ENCODE measurements at regions of chr16 and their contacts with region 1.

Region 1: DNA sequence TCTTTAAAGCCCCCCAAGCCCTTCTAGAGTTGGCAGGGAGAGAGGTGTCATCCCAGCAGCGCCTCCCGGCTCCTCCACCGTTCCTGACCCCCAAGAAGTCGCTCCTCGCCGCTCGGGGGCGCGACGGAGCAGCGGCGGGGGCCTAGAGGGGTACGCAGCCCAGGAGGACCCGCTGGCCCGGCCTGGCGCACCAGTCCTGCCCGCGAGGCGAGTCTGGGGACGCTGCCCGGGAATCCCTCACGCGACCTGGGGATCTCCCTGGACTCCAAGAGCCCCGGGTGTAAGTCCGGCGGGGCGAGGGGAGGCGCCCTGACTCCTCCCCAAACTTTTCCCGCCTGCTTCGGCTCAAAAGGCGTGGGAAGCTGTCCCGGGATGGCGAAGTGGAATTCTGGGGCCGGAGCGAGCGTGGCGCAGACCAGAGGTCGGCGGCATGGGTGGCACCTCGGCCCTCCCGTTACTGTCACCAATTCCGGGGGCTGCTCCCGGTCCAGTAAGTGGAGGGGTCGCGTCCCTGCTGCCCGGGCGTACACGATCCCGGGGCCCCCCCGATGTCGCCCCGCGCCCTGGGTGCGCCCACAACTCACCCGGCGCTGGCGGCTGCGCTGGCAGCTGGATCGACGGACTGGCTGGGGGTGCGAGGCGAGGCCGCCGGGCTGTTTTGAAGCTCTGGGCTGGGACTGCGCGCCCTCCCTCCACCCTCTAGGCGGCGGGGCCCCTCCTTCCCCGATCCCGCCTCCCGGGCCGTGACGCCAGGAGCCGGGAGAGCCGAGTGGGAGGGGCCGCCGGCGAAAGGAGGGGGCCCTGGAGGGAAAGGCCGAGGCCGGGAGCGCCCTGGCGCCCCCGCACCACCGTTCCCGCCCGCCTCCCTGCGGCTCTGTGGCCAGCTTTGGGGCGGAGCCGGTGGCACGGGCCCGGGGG is at the start of gene EMP2:
- DNase-seq: peak; percentile 76
- ATAC-seq: peak; percentile 66
- H3K4me3 ChIP-seq: peak within 1 kb of the TSS; percentile 89
- H3K27ac ChIP-seq: peak within 1 kb of the TSS; percentile 84
- H3K4me1 ChIP-seq: peaks cover 48% of the 10 kb centered on the region
- H3K27me3 ChIP-seq: no peaks in the 10 kb centered on the region
- CTCF ChIP-seq: peak; percentile 67
- total RNA-seq, gene EMP2: 33.9 and 38.7 TPM in 2 replicates

Region 2: GRCh38 chr16:10465821-10466220 is 114.4 kb before region 1 on chr16:
- CTCF ChIA-PET with region 1: no interaction called
- POLR2A ChIA-PET with region 1: no interaction called
- intact Hi-C with region 1: no loop called
- DNase-seq: no peak
- ATAC-seq: no peak
- H3K4me3 ChIP-seq: no peak overlapping the region
- H3K27ac ChIP-seq: no peak overlapping the region
- H3K4me1 ChIP-seq: no peaks in the 10 kb centered on the region
- H3K27me3 ChIP-seq: no peaks in the 10 kb centered on the region
- CTCF ChIP-seq: no peak

Region 3: GRCh38 chr16:10668322-10669045 is 88.3 kb after region 1 on chr16:
- CTCF ChIA-PET with region 1: no interaction called
- POLR2A ChIA-PET with region 1: no interaction called
- intact Hi-C with region 1: loop called (anchors 5 kb)
- DNase-seq: peak; percentile 45
- ATAC-seq: peak; percentile 88
- H3K4me3 ChIP-seq: no peak overlapping the region
- H3K27ac ChIP-seq: no peak overlapping the region
- H3K4me1 ChIP-seq: no peaks in the 10 kb centered on the region
- H3K27me3 ChIP-seq: no peaks in the 10 kb centered on the region
- CTCF ChIP-seq: peak; percentile 60